Calu3 (cell line): ENCODE measurements at regions of chr9 and their contacts with region 1.

Region 1: GRCh38 chr9:124829284-124829669 is 24.0 kb upstream of the WDR38 start:
- DNase-seq: no peak
- H3K4me3 Mint-ChIP-seq: no peak overlapping the region
- H3K27ac Mint-ChIP-seq: no peak overlapping the region
- H3K4me1 Mint-ChIP-seq: peaks cover 14% of the 10 kb centered on the region
- H3K27me3 Mint-ChIP-seq: peaks cover 16% of the 10 kb centered on the region
- CTCF ChIP-seq: no peak

Region 2: GRCh38 chr9:124645274-124645673 is 184.0 kb before region 1 on chr9:
- CTCF ChIA-PET with region 1: no interaction called
- intact Hi-C with region 1: no loop called
- DNase-seq: no peak
- H3K4me3 Mint-ChIP-seq: no peak overlapping the region
- H3K27ac Mint-ChIP-seq: no peak overlapping the region
- H3K4me1 Mint-ChIP-seq: no peaks in the 10 kb centered on the region
- H3K27me3 Mint-ChIP-seq: no peaks in the 10 kb centered on the region
- CTCF ChIP-seq: no peak

Region 3: DNA sequence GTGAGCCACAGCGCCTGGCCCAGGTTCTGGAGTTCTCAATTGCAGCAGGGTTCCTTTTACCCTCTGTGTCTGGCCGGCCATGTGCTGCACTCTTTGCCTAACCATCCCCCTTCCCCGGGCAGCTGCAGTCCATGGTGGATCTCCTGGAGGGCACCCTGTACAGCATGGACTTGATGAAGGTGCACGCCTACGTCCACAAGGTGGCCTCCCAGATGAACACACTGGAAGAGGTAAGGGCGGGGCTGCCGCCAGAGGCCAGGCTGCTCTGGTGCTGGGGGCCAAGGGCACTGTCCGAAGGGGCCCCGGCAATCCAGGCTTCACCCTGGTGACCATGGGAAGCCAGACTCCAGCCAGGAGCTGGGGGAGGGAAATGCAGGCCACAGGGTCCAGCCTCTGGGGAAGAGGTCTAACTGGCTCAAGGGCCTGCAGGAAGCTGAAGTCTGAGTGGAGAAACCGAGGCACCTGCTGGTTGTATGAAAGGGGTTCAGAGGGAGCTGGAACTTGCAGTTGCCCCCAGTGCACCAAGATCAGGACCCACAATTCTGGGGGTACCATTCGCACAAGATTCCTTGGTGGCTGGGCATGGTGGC is 34.3 kb before region 1 on chr9:
- CTCF ChIA-PET with region 1: interaction called, 10 read pairs
- intact Hi-C with region 1: no loop called
- DNase-seq: peak; percentile 66
- H3K4me3 Mint-ChIP-seq: no peak overlapping the region
- H3K27ac Mint-ChIP-seq: no peak overlapping the region
- H3K4me1 Mint-ChIP-seq: no peaks in the 10 kb centered on the region
- H3K27me3 Mint-ChIP-seq: peaks cover 25% of the 10 kb centered on the region
- CTCF ChIP-seq: peak; percentile 22

Region 4: GRCh38 chr9:125325831-125326230 is 496.6 kb after region 1 on chr9:
- CTCF ChIA-PET with region 1: no interaction called
- intact Hi-C with region 1: no loop called
- DNase-seq: no peak
- H3K4me3 Mint-ChIP-seq: no peak overlapping the region
- H3K27ac Mint-ChIP-seq: no peak overlapping the region
- H3K4me1 Mint-ChIP-seq: no peaks in the 10 kb centered on the region
- H3K27me3 Mint-ChIP-seq: no peaks in the 10 kb centered on the region
- CTCF ChIP-seq: no peak

Region 5: GRCh38 chr9:125391704-125392103 is 562.4 kb after region 1 on chr9:
- CTCF ChIA-PET with region 1: no interaction called
- intact Hi-C with region 1: no loop called
- DNase-seq: no peak
- H3K4me3 Mint-ChIP-seq: no peak overlapping the region
- H3K27ac Mint-ChIP-seq: no peak overlapping the region
- H3K4me1 Mint-ChIP-seq: no peaks in the 10 kb centered on the region
- H3K27me3 Mint-ChIP-seq: no peaks in the 10 kb centered on the region
- CTCF ChIP-seq: no peak